Activated CD8-positive, alpha-beta T cell treated with anti-CD3 and anti-CD28 coated beads for 36 hours (primary cell): ENCODE measurements at regions of chr2 and their contacts with region 1.

Region 1: GRCh38 chr2:54558188-54559005 is 102.3 kb downstream of the SPTBN1 start:
- DNase-seq: peak; percentile 84
- ATAC-seq: peak; percentile 57
- H3K4me3 Mint-ChIP-seq: peak overlapping the region; percentile 86
- H3K27ac Mint-ChIP-seq: peak overlapping the region; percentile 95
- H3K4me1 Mint-ChIP-seq: peaks cover 50% of the 10 kb centered on the region
- H3K27me3 Mint-ChIP-seq: no peaks in the 10 kb centered on the region
- CTCF ChIP-seq: no peak

Region 2: DNA sequence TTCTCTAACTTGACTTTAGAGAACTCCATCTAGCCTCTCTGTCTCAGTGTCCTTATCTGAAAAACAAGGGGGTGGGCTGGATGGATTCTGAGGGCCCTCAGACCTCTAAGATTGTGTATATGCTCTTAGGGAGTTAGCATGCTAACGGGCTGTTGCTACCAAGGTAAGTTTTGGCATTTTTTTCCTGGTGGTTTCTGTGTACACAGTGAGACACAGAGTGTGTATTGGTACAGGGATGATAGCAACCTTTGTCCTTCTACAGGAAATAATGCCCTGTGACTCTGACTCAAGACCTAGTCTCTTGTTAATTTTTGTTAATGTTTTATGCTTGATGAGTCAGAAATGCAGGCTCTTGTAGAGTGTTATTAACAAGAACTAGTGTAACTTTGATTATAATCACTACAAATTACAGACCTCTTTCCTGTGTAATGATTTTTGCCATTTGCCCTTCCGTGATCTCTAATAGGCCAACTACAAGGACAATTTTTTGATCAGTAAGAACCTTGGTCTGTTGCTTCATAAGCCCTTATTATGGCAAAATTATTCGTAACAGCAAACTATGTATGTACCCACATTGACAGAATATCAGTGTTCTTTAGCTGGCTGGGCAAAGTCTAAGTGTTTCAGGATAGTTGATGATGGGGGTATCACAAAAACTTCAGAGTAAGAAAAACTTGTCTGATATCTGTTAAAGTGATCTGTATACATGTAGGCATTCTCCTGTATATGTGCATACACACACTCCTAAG is 12.5 kb before region 1 on chr2:
- CTCF ChIA-PET with region 1: interaction called, 12 read pairs
- POLR2A ChIA-PET with region 1: interaction called, 15 read pairs
- intact Hi-C with region 1: no loop called
- DNase-seq: no peak
- ATAC-seq: peak; percentile 51
- H3K4me3 Mint-ChIP-seq: no peak overlapping the region
- H3K27ac Mint-ChIP-seq: no peak overlapping the region
- H3K4me1 Mint-ChIP-seq: peaks cover 13% of the 10 kb centered on the region
- H3K27me3 Mint-ChIP-seq: no peaks in the 10 kb centered on the region
- CTCF ChIP-seq: no peak

Region 3: GRCh38 chr2:54579684-54580620 is 21.6 kb after region 1 on chr2:
- CTCF ChIA-PET with region 1: interaction called, 24 read pairs
- POLR2A ChIA-PET with region 1: interaction called, 100 read pairs
- intact Hi-C with region 1: no loop called
- DNase-seq: peak; percentile 71
- ATAC-seq: peak; percentile 60
- H3K4me3 Mint-ChIP-seq: peak overlapping the region; percentile 59
- H3K27ac Mint-ChIP-seq: peak overlapping the region; percentile 95
- H3K4me1 Mint-ChIP-seq: peaks cover 90% of the 10 kb centered on the region
- H3K27me3 Mint-ChIP-seq: no peaks in the 10 kb centered on the region
- CTCF ChIP-seq: no peak

Region 4: GRCh38 chr2:54597153-54597848 is 38.9 kb after region 1 on chr2:
- CTCF ChIA-PET with region 1: interaction called, 13 read pairs
- POLR2A ChIA-PET with region 1: interaction called, 44 read pairs
- intact Hi-C with region 1: loop called (anchors 5 kb)
- DNase-seq: peak; percentile 70
- ATAC-seq: peak; percentile 63
- H3K4me3 Mint-ChIP-seq: peak overlapping the region; percentile 70
- H3K27ac Mint-ChIP-seq: peak overlapping the region; percentile 98
- H3K4me1 Mint-ChIP-seq: peaks cover 93% of the 10 kb centered on the region
- H3K27me3 Mint-ChIP-seq: no peaks in the 10 kb centered on the region
- CTCF ChIP-seq: no peak

Region 5: DNA sequence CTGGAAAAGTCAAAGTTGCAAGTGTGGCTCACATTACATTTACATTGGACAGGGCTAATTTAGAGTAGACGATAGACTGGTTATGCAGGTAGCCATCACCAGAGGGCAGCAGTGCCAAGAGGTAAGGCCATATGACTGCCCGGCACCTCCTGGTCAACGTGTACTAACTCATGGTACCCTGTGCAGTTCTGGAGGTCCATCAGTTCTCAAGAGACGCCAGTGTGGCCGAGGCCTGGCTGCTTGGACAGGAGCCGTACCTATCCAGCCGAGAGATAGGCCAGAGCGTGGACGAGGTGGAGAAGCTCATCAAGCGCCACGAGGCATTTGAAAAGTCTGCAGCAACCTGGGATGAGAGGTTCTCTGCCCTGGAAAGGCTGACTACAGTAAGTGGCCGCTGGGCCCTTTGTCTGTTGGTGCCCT is 99.3 kb after region 1 on chr2:
- CTCF ChIA-PET with region 1: interaction called, 20 read pairs
- POLR2A ChIA-PET with region 1: interaction called, 4 read pairs
- intact Hi-C with region 1: no loop called
- DNase-seq: peak; percentile 62
- ATAC-seq: peak; percentile 64
- H3K4me3 Mint-ChIP-seq: no peak overlapping the region
- H3K27ac Mint-ChIP-seq: peak overlapping the region; percentile 57
- H3K4me1 Mint-ChIP-seq: peaks cover 14% of the 10 kb centered on the region
- H3K27me3 Mint-ChIP-seq: no peaks in the 10 kb centered on the region
- CTCF ChIP-seq: peak; percentile 67